Activated B cell treated with CpG ODN at 0.5 μM for 24 hours (primary cell): ENCODE measurements at regions of chr17 and their contacts with region 1.

Region 1: GRCh38 chr17:7214300-7215135 is 5.1 kb downstream of the DLG4 start:
- DNase-seq: peak; percentile 98
- ATAC-seq: peak; percentile 86
- H3K4me3 Mint-ChIP-seq: peak overlapping the region; percentile 88
- H3K27ac Mint-ChIP-seq: peak overlapping the region; percentile 94
- H3K4me1 Mint-ChIP-seq: peaks cover 53% of the 10 kb centered on the region
- H3K27me3 Mint-ChIP-seq: no peaks in the 10 kb centered on the region
- CTCF ChIP-seq: no peak

Region 2: DNA sequence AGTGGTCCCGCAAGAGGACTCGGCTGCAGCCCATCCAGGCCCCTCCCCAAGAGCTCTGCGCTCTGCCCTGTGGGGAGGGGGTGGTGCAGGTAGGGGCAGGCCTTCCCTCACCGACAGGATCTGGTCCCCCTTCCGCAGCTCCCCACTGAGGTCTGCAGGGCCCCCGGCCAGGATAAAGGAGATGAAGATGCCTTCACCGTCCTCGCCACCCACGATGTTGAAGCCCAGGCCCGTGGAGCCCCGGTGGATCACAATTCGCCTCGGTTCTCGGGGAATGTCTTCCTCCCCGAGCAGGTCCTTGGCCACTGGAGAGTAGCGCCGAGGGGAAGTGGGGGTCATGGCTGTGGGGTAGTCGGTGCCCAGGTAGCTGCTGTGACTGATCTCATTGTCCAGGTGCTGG is 17.9 kb before region 1 on chr17:
- CTCF ChIA-PET with region 1: no interaction called
- POLR2A ChIA-PET with region 1: no interaction called
- intact Hi-C with region 1: no loop called
- DNase-seq: no peak
- ATAC-seq: no peak
- H3K4me3 Mint-ChIP-seq: no peak overlapping the region
- H3K27ac Mint-ChIP-seq: no peak overlapping the region
- H3K4me1 Mint-ChIP-seq: no peaks in the 10 kb centered on the region
- H3K27me3 Mint-ChIP-seq: no peaks in the 10 kb centered on the region
- CTCF ChIP-seq: no peak

Region 3: GRCh38 chr17:7234083-7234951 is 19.8 kb after region 1 on chr17 and contains the start of gene DVL2:
- CTCF ChIA-PET with region 1: interaction called, 3 read pairs
- POLR2A ChIA-PET with region 1: interaction called, 245 read pairs
- intact Hi-C with region 1: loop called (anchors 1 kb)
- DNase-seq: peak; percentile 93
- ATAC-seq: peak; percentile 47
- H3K4me3 Mint-ChIP-seq: peak within 1 kb of the TSS; percentile 86
- H3K27ac Mint-ChIP-seq: peak within 1 kb of the TSS; percentile 88
- H3K4me1 Mint-ChIP-seq: peaks cover 51% of the 10 kb centered on the region
- H3K27me3 Mint-ChIP-seq: no peaks in the 10 kb centered on the region
- CTCF ChIP-seq: no peak
- total RNA-seq, gene DVL2: 56.1 and 64.6 TPM in 2 replicates

Region 4: GRCh38 chr17:7252176-7253043 is 37.9 kb after region 1 on chr17 and contains the start of gene ELP5:
- CTCF ChIA-PET with region 1: no interaction called
- POLR2A ChIA-PET with region 1: interaction called, 9 read pairs
- intact Hi-C with region 1: loop called (anchors 1 kb)
- DNase-seq: no peak
- ATAC-seq: peak; percentile 61
- H3K4me3 Mint-ChIP-seq: peak within 1 kb of the TSS; percentile 98
- H3K27ac Mint-ChIP-seq: peak within 1 kb of the TSS; percentile 100
- H3K4me1 Mint-ChIP-seq: peaks cover 44% of the 10 kb centered on the region
- H3K27me3 Mint-ChIP-seq: no peaks in the 10 kb centered on the region
- CTCF ChIP-seq: no peak
- total RNA-seq, gene ELP5: 49.2 and 53.6 TPM in 2 replicates